IMR-90 (cell line): ENCODE measurements at regions of chr6 and their contacts with region 1.

Region 1: DNA sequence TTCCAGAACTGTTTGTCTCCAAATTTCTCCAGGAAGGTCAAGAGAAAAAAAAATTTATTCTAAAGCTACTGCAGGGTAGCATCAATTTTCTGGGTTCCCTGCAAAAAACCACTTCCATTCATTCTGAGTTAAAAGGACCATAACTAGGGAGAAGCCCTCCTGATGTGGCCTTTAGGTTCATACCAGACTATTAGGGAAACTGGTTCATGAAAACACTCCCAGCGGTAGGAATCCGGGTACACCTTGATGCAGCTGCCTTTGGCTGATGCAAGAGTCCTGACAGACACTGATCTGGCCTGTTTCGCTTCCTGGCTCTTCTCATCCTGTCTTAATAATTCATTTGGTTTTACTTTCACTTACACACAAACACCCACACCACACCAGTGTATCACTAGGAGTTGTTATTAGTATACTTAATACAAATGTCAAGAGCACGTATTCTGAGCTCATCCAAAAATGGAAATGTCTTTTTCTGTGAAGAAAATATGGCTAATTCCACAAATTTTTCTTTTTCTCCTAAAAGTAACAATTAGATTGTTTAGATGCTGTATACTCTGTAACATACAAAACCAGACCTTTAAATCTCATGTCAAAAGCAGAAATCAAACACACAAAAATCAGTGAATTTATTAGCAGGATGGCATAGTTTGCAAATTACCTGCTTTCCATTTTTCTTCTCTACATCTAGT is 38.4 kb upstream of the ARHGAP18 start:
- DNase-seq: peak; percentile 61
- ATAC-seq: no peak
- H3K4me3 ChIP-seq: no peak overlapping the region
- H3K27ac ChIP-seq: peak overlapping the region; percentile 58; the same call in 1 of the 2 replicates
- H3K4me1 ChIP-seq: peaks cover 16% of the 10 kb centered on the region
- H3K27me3 ChIP-seq: no peaks in the 10 kb centered on the region
- CTCF ChIP-seq: no peak
- POLR2A ChIP-seq: no peak
- RAD21 ChIP-seq: no peak

Region 2: GRCh38 chr6:129609635-129610034 is 138.7 kb before region 1 on chr6:
- CTCF ChIA-PET with region 1: no interaction called
- POLR2A ChIA-PET with region 1: no interaction called
- dilution Hi-C with region 1: no loop called
- in situ Hi-C with region 1: loop called (anchors 10 kb)
- intact Hi-C with region 1: no loop called
- DNase-seq: no peak
- ATAC-seq: no peak
- H3K4me3 ChIP-seq: no peak overlapping the region
- H3K27ac ChIP-seq: no peak overlapping the region
- H3K4me1 ChIP-seq: peaks cover 4% of the 10 kb centered on the region; the same call in 1 of the 2 replicates
- H3K27me3 ChIP-seq: no peaks in the 10 kb centered on the region
- CTCF ChIP-seq: no peak
- POLR2A ChIP-seq: no peak
- RAD21 ChIP-seq: no peak

Region 3: DNA sequence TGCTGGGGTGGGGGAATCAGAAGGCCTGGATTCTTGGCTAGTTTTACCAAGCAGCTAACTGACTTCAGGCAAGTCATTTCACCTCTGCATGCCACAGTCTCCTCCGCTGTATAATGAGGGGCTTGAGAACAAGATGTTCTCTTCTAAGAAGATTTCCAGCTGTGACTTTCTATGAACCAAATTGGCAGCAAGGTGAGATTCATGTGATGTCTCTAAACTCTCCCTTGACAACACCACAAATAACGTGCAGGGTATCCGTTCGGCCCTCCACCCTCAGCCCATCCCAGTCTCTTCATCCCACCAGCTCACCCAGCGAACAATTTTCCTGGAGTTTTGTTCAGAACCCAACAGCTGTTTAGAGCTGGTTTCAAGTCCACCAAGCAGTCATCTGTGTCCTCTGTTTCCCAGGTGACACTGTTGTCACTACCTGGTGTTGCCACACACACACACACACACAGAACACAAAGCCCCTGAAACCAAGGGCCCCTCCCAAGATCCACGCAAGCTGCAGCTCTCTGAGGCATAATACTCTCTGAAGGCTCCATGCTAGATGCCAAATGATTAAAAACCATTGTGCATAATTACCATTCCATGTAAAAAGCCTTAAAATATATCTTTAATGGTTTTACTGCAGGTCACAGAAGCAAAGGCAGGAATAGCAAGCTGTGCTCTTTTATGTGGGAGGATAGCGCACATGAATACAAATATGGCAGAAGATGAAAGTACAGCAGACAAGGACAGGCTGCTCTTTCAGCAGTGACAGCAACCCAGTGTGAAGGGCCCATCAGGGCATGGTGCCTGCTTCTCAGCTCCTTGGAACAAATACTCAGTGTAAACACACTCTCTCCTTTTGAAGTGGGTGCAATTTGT is 86.6 kb before region 1 on chr6:
- CTCF ChIA-PET with region 1: no interaction called
- POLR2A ChIA-PET with region 1: interaction called, 13 read pairs
- dilution Hi-C with region 1: no loop called
- in situ Hi-C with region 1: no loop called
- intact Hi-C with region 1: no loop called
- DNase-seq: no peak
- ATAC-seq: no peak; the same call in 1 of the 2 replicates
- H3K4me3 ChIP-seq: no peak overlapping the region
- H3K27ac ChIP-seq: no peak overlapping the region
- H3K4me1 ChIP-seq: no peaks in the 10 kb centered on the region
- H3K27me3 ChIP-seq: no peaks in the 10 kb centered on the region
- CTCF ChIP-seq: no peak
- POLR2A ChIP-seq: no peak
- RAD21 ChIP-seq: no peak

Region 4: DNA sequence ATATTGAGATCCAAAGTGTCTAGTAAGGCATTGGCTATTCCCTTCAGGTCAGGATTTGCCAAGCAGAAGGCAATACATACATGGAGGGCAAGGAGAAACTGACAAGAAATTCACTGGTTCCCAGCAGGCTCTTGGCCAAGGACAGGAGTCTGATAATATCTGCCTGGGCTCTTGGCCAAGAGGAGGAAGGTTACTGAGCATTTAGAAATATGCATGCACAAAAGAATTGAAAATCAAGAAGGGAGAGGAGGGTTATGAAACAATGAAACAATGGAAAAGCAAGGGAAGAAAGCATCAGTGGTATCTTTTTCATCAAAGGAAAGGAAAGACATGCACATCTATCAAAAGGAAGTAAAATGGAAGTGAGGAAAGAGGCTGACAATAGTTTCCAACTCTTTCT is 80.7 kb before region 1 on chr6:
- CTCF ChIA-PET with region 1: no interaction called
- POLR2A ChIA-PET with region 1: no interaction called
- dilution Hi-C with region 1: no loop called
- in situ Hi-C with region 1: no loop called
- intact Hi-C with region 1: loop called (anchors 1 kb)
- DNase-seq: peak; percentile 50
- ATAC-seq: no peak
- H3K4me3 ChIP-seq: no peak overlapping the region
- H3K27ac ChIP-seq: no peak overlapping the region
- H3K4me1 ChIP-seq: peaks cover 10% of the 10 kb centered on the region
- H3K27me3 ChIP-seq: no peaks in the 10 kb centered on the region
- CTCF ChIP-seq: no peak
- POLR2A ChIP-seq: no peak
- RAD21 ChIP-seq: no peak

Region 5: DNA sequence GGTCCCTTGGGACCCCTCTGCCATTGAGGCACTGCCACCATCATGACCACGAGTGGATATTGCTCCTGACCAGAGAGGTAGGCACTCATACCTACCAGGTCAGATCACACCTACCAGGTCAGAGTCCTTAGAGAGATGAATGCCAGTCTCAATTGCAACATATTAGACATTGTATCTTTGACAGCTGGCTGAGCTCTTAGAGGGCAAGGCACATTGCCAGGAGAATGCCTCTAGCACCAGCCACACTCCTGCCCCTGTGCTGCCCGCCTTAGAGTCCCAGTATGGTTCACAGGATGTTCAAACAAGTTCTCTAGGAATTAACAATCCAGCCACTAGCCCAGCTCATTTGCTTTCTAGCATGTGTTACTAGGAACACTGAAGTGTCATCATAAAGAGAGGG is 46.9 kb after region 1 on chr6:
- CTCF ChIA-PET with region 1: no interaction called
- POLR2A ChIA-PET with region 1: no interaction called
- dilution Hi-C with region 1: no loop called
- in situ Hi-C with region 1: no loop called
- intact Hi-C with region 1: no loop called
- DNase-seq: no peak
- ATAC-seq: no peak
- H3K4me3 ChIP-seq: no peak overlapping the region
- H3K27ac ChIP-seq: no peak overlapping the region
- H3K4me1 ChIP-seq: no peaks in the 10 kb centered on the region
- H3K27me3 ChIP-seq: no peaks in the 10 kb centered on the region
- CTCF ChIP-seq: no peak
- POLR2A ChIP-seq: no peak
- RAD21 ChIP-seq: no peak